ENCODE measurements at regions of chr7 and their contacts with region 1.

Region 1: DNA sequence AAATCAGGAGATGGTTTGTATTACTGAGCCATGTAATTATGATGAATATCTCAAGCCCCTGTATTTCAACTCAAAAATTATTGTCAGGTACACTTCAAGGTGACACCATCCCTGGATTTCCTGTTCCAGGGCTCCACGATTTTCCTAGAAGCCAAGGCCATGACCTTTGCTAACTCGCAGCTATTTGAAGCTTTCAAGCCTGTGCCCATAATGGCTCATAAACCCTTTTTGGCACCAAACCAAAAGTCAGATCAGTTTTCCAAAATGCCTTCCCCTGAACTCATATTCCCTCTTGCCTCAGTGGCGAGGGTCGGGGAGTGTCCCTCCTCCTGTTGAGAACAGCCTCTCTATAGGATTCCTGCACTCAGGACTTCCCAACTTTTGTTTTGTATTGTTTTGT is 70.8 kb downstream of the HIP1 start:
- DNase-seq: no peak
- H3K4me3 ChIP-seq: no peak overlapping the region
- H3K4me3 Mint-ChIP-seq: no peak overlapping the region
- H3K27ac ChIP-seq: no peak overlapping the region
- H3K27ac Mint-ChIP-seq: no peak overlapping the region
- H3K4me1 ChIP-seq: peaks cover 18 to 20% of the 10 kb centered on the region in 2 donors
- H3K4me1 Mint-ChIP-seq: peaks cover 21% of the 10 kb centered on the region
- H3K27me3 ChIP-seq: no peaks in the 10 kb centered on the region
- H3K27me3 Mint-ChIP-seq: peaks cover 0 to 2% (median 0%) of the 10 kb centered on the region in 3 donors
- CTCF ChIP-seq: no peak

Region 2: GRCh38 chr7:75738987-75739795 is 71.3 kb after region 1 on chr7:
- intact Hi-C with region 1: loop called (anchors 5 to 10 kb)
- DNase-seq: peak; percentile 99
- H3K4me3 ChIP-seq: peak overlapping the region; percentile 80 to 95 (median 92)
- H3K4me3 Mint-ChIP-seq: peak overlapping the region; percentile 95 to 96
- H3K27ac ChIP-seq: peak overlapping the region; percentile 90 to 93
- H3K27ac Mint-ChIP-seq: peak overlapping the region; percentile 86 to 99 (median 98)
- H3K4me1 ChIP-seq: peaks cover 36 to 40% of the 10 kb centered on the region in 2 donors
- H3K4me1 Mint-ChIP-seq: peaks cover 34% of the 10 kb centered on the region
- H3K27me3 ChIP-seq: no peaks in the 10 kb centered on the region
- H3K27me3 Mint-ChIP-seq: peaks cover 1 to 8% (median 8%) of the 10 kb centered on the region in 3 donors
- CTCF ChIP-seq: no peak

Region 3: DNA sequence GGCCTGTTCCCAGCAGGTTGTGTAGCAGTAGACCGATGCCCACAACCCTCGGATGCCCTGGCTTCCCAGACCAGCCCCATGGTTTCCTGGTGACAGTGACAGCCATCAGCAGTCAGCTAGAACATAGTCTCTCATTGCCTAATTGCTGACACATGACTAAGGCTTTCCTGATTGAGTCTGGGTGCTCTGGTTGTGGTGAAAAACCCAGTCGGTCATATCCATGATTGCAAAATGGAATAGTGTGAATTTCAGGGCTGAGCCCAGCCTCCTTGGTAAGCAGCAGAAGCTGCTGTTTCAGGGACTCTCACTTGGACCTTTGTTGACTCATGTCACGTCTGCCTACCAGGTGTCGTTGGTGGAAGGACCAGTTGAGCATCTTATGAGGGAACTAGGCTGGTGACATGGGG is 283.6 kb after region 1 on chr7:
- intact Hi-C with region 1: loop called in 1 of 2 experiments (anchors 5 kb)
- DNase-seq: peak; percentile 95 to 100 (median 98)
- H3K4me3 ChIP-seq: no peak overlapping the region
- H3K4me3 Mint-ChIP-seq: peak overlapping the region; percentile 27 to 35
- H3K27ac ChIP-seq: peak overlapping the region; percentile 69 to 73
- H3K27ac Mint-ChIP-seq: peak overlapping the region; percentile 85 to 95 (median 91)
- H3K4me1 ChIP-seq: peaks cover 50 to 57% of the 10 kb centered on the region in 2 donors
- H3K4me1 Mint-ChIP-seq: peaks cover 61% of the 10 kb centered on the region
- H3K27me3 ChIP-seq: no peaks in the 10 kb centered on the region
- H3K27me3 Mint-ChIP-seq: peaks cover 0 to 8% (median 4%) of the 10 kb centered on the region in 3 donors
- CTCF ChIP-seq: no peak